ENCODE measurements at regions of chr22 and their contacts with region 1.

Region 1: DNA sequence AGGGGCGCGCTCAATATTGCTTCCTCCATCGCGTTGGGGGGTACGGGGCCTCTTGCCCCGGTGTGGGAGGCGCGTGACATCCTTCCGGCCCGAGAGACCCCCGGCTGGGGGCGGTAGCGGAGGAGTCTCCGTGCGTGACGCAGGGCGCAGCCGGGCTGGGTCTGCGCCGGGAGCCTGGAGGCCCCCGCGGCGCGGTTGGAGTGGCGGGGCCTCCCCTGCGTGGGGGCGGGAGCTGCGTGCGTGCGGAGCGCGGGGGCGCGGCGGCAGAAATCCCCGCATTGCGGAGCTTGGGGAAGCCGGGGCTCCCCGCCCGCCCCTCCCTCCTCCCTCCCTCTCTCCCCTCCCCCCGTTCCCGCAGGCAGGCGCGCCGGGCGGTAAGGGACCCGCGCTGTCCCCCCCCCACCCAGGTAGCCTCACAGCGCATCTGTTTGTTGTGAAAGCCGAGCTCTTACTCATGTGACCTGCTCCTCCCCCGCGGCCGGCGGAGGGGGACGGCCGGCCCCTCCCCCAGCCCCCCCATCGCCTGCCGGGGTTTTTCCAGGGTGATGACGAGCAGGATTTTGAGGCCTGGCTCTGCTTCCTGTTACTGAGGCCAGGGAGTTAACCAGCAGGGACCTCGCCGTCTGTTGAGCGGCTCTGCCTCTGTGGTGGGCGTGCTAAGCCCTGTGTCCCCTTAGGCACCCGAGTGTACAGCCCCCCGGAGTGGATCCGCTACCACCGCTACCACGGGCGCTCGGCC is 1.6 kb downstream of the PIM3 start:
- DNase-seq: peak in 1 of 2 experiments; percentile 77
- H3K4me3 ChIP-seq: peak overlapping the region; percentile 49 to 79 (median 74)
- H3K27ac ChIP-seq: peak overlapping the region; percentile 79
- H3K4me1 ChIP-seq: peaks cover 0 to 27% (median 13%) of the 10 kb centered on the region in 4 experiments; a peak in 5 of 7 replicates
- H3K27me3 ChIP-seq: peaks cover 0 to 12% (median 6%) of the 10 kb centered on the region in 4 experiments; a peak in 6 of 7 replicates
- CTCF ChIP-seq: peak in 1 of 3 experiments; percentile 5; a peak in 1 of 4 replicates
- EP300 ChIP-seq: peak; percentile 23 to 50; a peak in 1 of 3 replicates
- POLR2A ChIP-seq: peak in 1 of 2 experiments; percentile 54; a peak in 2 of 3 replicates
- RAD21 ChIP-seq: no peak

Region 2: DNA sequence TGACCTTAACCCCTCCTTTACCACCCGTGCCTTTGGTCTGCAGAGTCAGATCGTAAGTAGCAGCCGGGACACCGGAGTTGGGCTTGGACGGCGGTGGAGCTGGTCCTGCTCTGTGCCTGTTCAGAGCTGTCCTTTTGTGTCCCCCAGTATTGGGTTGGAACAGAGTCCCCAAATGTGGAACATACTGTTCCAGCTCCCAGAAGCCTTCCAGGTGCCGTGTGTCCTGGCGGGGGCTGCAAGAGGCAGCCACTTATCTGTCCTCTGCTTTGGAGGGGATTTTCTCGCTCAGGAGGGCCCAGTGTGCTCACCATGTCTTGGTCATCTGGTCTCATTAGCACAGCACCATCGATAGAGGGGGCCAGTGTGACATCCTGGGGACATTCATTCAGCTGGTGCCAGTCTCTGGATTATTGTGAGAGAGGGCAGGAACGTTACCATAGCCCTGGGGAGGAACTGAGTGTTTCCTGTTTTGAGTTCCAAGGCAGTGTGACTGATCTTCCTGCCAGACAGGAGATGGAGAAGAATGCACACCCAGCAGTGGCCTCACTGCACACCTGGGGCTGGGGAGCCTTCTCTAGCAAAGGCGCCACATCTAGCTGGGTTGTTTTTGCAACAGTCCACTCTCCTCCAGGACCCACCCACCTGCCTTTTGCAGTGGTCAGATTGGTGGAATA is 31.3 kb before region 1 on chr22:
- CTCF ChIA-PET with region 1: interaction called, 10 read pairs
- POLR2A ChIA-PET with region 1: interaction called, 8 read pairs
- DNase-seq: no peak
- H3K4me3 ChIP-seq: no peak overlapping the region
- H3K27ac ChIP-seq: no peak overlapping the region
- H3K4me1 ChIP-seq: peaks cover 0 to 8% (median 1%) of the 10 kb centered on the region in 4 experiments; a peak in 2 of 7 replicates
- H3K27me3 ChIP-seq: peaks cover 0 to 12% (median 10%) of the 10 kb centered on the region in 4 experiments; a peak in 6 of 7 replicates
- CTCF ChIP-seq: peak in 2 of 3 experiments; percentile 61 to 62; a peak in 3 of 4 replicates
- EP300 ChIP-seq: no peak
- POLR2A ChIP-seq: no peak
- RAD21 ChIP-seq: peak; percentile 64 to 73

Region 3: DNA sequence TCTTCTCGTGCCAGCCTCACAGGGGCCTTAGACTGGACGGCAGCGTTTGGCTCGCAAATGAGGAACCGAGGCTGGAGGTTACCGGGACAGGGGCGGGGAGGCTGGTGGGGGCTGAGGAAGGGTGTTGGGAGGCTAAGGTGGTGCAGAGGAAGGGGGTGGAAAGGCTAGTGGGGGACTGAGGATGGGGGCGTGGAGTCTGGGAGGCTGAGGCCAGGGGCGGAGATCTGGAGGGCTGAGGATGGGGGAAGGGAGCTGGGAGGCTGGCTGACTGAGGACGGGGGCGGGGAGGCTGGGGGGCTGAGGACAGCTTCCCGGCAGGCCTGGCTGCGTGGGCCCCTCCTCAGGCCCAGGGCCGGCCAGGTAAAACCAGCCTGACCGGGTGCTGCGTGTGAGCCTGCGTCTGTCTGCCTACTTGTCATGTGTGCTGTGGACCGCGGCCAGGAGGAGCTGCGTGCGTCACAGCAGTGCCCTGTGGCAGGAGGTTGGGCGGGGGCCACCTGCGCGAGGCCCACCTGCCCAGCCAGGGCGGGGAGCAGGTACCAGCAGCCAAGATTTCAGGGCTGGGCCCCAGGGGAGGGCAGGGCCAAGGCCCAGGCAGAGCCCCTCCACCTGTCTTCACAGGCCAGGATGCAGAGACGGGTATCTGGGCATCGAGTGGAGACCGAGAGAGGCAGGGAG is 11.0 kb before region 1 on chr22:
- CTCF ChIA-PET with region 1: interaction called, 5 read pairs
- POLR2A ChIA-PET with region 1: interaction called, 10 read pairs
- DNase-seq: no peak
- H3K4me3 ChIP-seq: no peak overlapping the region
- H3K27ac ChIP-seq: no peak overlapping the region
- H3K4me1 ChIP-seq: peaks cover 0 to 32% (median 17%) of the 10 kb centered on the region in 4 experiments; a peak in 5 of 7 replicates
- H3K27me3 ChIP-seq: no peaks in the 10 kb centered on the region
- CTCF ChIP-seq: no peak
- EP300 ChIP-seq: no peak
- POLR2A ChIP-seq: no peak
- RAD21 ChIP-seq: no peak

Region 4: GRCh38 chr22:49979587-49980264 is 17.5 kb after region 1 on chr22:
- CTCF ChIA-PET with region 1: interaction called, 12 read pairs
- POLR2A ChIA-PET with region 1: interaction called, 3 read pairs
- DNase-seq: peak in 1 of 2 experiments; percentile 57
- H3K4me3 ChIP-seq: no peak overlapping the region
- H3K27ac ChIP-seq: no peak overlapping the region
- H3K4me1 ChIP-seq: peaks cover 0 to 4% (median 0%) of the 10 kb centered on the region in 4 experiments; a peak in 1 of 7 replicates
- H3K27me3 ChIP-seq: peaks cover 4 to 18% (median 13%) of the 10 kb centered on the region in 4 experiments
- CTCF ChIP-seq: peak; percentile 47 to 90 (median 57)
- EP300 ChIP-seq: no peak
- POLR2A ChIP-seq: no peak
- RAD21 ChIP-seq: peak; percentile 33 to 55; a peak in 3 of 4 replicates